ENCODE measurements at regions of chr2 and their contacts with region 1.

Region 1: GRCh38 chr2:218186355-218186766 is 19.6 kb upstream of the CXCR1 start:
- DNase-seq: peak; percentile 56
- H3K4me3 Mint-ChIP-seq: no peak overlapping the region
- H3K27ac Mint-ChIP-seq: no peak overlapping the region
- H3K4me1 Mint-ChIP-seq: peaks cover 13% of the 10 kb centered on the region
- H3K27me3 Mint-ChIP-seq: peaks cover 7% of the 10 kb centered on the region

Region 2: GRCh38 chr2:218229239-218229638 is 42.9 kb after region 1 on chr2:
- intact Hi-C with region 1: loop called (anchors 2 kb)
- DNase-seq: peak; percentile 38
- H3K4me3 Mint-ChIP-seq: peak overlapping the region; percentile 47
- H3K27ac Mint-ChIP-seq: peak overlapping the region; percentile 85
- H3K4me1 Mint-ChIP-seq: peaks cover 59% of the 10 kb centered on the region
- H3K27me3 Mint-ChIP-seq: no peaks in the 10 kb centered on the region

Region 3: DNA sequence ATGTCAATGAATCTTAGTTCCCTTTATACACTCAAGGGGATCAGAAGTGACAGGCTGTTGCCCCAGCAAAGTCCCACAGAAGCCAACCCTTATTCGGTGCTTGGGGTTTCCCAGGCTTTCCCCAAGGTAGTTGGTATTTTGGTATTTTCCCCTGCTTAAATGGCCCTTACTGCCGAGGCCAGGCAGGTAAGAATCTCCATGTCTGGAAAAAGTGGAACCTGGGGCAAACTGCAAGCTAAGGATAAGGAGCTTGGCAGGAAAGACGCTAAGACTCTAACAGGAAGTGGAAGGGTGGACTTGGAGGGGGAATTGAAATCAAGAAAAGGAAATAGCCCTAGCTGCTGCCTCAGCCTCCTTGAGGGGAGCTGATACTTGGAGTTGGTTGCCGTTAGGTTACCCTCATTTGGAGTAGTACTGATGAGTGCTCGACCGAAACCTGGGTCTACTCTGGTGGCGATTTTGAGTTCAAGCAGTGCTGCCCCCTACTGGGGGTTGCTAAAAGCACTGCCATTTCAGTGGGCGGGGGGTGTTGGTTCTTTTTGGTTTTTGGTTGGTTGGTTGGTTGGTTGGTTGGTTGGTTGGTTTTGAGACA is 71.1 kb after region 1 on chr2:
- intact Hi-C with region 1: loop called (anchors 1 kb)
- DNase-seq: peak; percentile 58
- H3K4me3 Mint-ChIP-seq: no peak overlapping the region
- H3K27ac Mint-ChIP-seq: peak overlapping the region; percentile 83
- H3K4me1 Mint-ChIP-seq: peaks cover 15% of the 10 kb centered on the region
- H3K27me3 Mint-ChIP-seq: no peaks in the 10 kb centered on the region